ENCODE measurements at regions of chrX and their contacts with region 1.

Region 1: DNA sequence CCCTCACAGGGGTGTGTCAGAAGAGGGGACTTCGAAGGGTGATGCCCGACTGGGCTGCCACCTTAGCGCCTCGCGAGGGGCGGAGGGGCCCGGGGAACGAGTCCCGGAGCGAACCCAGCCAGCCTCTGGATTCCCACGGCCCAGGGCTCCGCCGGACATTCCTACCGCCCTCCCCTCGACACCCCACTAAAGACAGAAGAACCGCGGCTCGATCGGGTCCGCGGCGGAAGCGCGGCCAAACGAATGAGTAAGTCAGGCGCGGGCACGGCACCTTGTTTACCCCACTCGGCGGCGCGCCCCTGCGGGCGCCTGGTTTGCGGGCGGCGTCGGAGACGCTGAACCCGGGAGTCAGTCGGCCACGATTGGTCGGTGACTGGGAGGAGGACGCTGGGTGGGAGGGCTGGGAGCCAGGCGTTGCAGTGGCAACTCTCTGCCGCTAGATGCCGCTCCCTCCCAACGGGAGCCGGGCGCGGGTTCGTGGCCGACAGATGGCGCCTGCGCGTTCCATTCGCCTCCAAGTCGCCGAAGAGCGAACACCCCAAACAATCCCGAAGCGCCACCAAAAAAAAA is 1.4 kb upstream of the STAG2 start:
- DNase-seq: peak; percentile 95

Region 2: DNA sequence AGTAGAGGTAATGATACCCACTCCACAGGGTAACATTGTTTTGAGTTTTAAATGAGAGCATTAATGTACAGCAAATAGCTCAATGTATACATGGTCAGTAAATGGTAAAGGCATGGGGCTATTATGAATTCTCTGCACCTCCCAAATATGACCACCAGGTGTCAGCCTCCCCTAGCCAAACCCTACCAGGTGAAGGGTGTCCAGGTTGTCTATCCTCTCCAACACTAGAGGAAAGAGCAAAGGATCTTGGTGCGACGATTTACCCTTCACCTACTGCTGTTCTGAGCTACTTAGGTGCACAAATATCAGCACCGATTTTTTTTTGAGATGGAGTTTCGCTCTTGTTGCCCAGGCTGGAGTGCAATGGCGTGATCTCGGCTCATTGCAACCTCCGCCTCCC is 126.7 kb before region 1 on chrX:
- intact Hi-C with region 1: loop called (anchors 10 kb)
- DNase-seq: no peak

Region 3: GRCh38 chrX:123859846-123860838 is 100.0 kb before region 1 on chrX and contains the start of gene XIAP:
- intact Hi-C with region 1: loop called (anchors 10 kb)
- DNase-seq: peak; percentile 88
- total RNA-seq, gene XIAP: 27.6 TPM

Region 4: GRCh38 chrX:124018023-124018422 is 57.9 kb after region 1 on chrX:
- intact Hi-C with region 1: loop called (anchors 5 kb)
- DNase-seq: no peak

Measured in cardiac septum (tissue), 1 donor.